Cardiac septum (tissue), 1 donor: ENCODE measurements at regions of chr1 and their contacts with region 1.

Region 1: DNA sequence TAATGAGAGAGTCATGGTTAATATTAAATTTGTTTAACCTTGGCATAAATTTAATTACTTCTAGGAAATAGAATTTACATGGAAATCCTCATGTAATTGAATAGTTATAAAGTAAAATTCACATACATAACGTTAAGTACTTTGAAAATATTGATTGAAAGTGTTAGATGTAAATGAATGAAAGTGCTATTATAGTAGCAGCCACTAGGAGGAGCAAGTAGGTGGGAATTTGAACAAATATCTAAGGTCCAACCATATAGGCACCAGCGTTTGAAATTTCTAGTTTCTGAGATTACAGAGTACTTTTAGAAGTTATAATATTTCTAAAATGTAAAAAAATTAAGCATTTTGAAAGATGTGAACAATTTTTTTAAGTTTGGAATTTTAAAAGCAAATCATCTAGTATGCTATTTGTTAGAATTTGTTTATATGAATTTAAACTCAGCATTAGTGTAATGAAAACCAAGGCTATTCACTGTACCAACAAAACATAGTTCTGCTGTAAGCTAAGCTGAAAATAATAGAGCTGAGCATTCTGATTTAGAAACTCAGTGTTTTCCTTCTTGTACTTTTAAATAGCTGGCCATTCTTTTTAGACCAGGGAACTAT is 3.3 kb downstream of the B3GALT2 start:
- DNase-seq: no peak

Region 2: GRCh38 chr1:193131266-193131860 is 51.8 kb before region 1 on chr1:
- intact Hi-C with region 1: no loop called
- DNase-seq: no peak

Region 3: GRCh38 chr1:193589597-193590040 is 406.5 kb after region 1 on chr1:
- intact Hi-C with region 1: loop called (anchors 10 kb)
- DNase-seq: no peak

Region 4: DNA sequence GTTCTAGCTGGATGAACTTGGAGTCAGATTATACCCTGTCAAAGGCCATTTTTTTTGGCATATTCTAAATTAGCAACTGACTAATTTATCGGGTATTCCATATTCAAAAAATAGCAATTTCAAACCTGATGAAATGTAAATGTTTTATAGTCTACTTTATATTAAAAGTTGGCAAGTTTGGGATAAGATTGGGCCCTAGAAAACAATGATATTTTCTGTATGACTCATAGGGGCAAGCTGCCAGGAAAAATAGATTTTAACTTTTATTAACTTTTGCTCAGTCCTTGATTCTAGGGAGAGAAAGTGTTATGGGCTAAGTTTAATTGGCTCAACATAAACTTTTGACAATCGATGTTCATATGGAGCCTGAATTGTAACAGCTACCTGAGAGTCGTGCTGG is 580.1 kb after region 1 on chr1:
- intact Hi-C with region 1: loop called (anchors 10 kb)
- DNase-seq: no peak

Region 5: GRCh38 chr1:194069168-194069830 is 886.2 kb after region 1 on chr1:
- intact Hi-C with region 1: loop called (anchors 5 kb)
- DNase-seq: peak; percentile 86